Activated CD8-positive, alpha-beta T cell treated with anti-CD3 and anti-CD28 coated beads for 36 hours (primary cell): ENCODE measurements at regions of chr7 and their contacts with region 1.

Region 1: GRCh38 chr7:74206589-74207120 is 3.2 kb upstream of the LAT2 start:
- DNase-seq: peak; percentile 87
- ATAC-seq: peak; percentile 82
- H3K4me3 Mint-ChIP-seq: no peak overlapping the region
- H3K27ac Mint-ChIP-seq: no peak overlapping the region
- H3K4me1 Mint-ChIP-seq: peaks cover 15% of the 10 kb centered on the region
- H3K27me3 Mint-ChIP-seq: peaks cover 5% of the 10 kb centered on the region
- CTCF ChIP-seq: peak; percentile 99

Region 2: GRCh38 chr7:74173866-74174605 is 32.6 kb before region 1 on chr7 and contains the start of gene EIF4H:
- CTCF ChIA-PET with region 1: interaction called, 13 read pairs
- POLR2A ChIA-PET with region 1: interaction called, 4 read pairs
- intact Hi-C with region 1: no loop called
- DNase-seq: peak; percentile 96
- ATAC-seq: peak; percentile 87
- H3K4me3 Mint-ChIP-seq: peak within 1 kb of the TSS; percentile 81
- H3K27ac Mint-ChIP-seq: peak within 1 kb of the TSS; percentile 94
- H3K4me1 Mint-ChIP-seq: peaks cover 35% of the 10 kb centered on the region
- H3K27me3 Mint-ChIP-seq: no peaks in the 10 kb centered on the region
- CTCF ChIP-seq: no peak
- total RNA-seq, gene EIF4H: 461 to 464 TPM

Region 3: GRCh38 chr7:74193054-74193453 is 13.6 kb before region 1 on chr7:
- CTCF ChIA-PET with region 1: interaction called, 36 read pairs
- POLR2A ChIA-PET with region 1: interaction called, 10 read pairs
- intact Hi-C with region 1: no loop called
- DNase-seq: no peak
- ATAC-seq: no peak
- H3K4me3 Mint-ChIP-seq: no peak overlapping the region
- H3K27ac Mint-ChIP-seq: peak overlapping the region; percentile 57
- H3K4me1 Mint-ChIP-seq: peaks cover 24% of the 10 kb centered on the region
- H3K27me3 Mint-ChIP-seq: no peaks in the 10 kb centered on the region
- CTCF ChIP-seq: no peak

Region 4: GRCh38 chr7:74217455-74218342 is 11.0 kb after region 1 on chr7:
- CTCF ChIA-PET with region 1: interaction called, 19 read pairs
- POLR2A ChIA-PET with region 1: interaction called, 3 read pairs
- intact Hi-C with region 1: no loop called
- DNase-seq: peak; percentile 56
- ATAC-seq: peak; percentile 55
- H3K4me3 Mint-ChIP-seq: peak overlapping the region; percentile 8
- H3K27ac Mint-ChIP-seq: peak overlapping the region; percentile 73
- H3K4me1 Mint-ChIP-seq: peaks cover 16% of the 10 kb centered on the region
- H3K27me3 Mint-ChIP-seq: no peaks in the 10 kb centered on the region
- CTCF ChIP-seq: no peak

Region 5: DNA sequence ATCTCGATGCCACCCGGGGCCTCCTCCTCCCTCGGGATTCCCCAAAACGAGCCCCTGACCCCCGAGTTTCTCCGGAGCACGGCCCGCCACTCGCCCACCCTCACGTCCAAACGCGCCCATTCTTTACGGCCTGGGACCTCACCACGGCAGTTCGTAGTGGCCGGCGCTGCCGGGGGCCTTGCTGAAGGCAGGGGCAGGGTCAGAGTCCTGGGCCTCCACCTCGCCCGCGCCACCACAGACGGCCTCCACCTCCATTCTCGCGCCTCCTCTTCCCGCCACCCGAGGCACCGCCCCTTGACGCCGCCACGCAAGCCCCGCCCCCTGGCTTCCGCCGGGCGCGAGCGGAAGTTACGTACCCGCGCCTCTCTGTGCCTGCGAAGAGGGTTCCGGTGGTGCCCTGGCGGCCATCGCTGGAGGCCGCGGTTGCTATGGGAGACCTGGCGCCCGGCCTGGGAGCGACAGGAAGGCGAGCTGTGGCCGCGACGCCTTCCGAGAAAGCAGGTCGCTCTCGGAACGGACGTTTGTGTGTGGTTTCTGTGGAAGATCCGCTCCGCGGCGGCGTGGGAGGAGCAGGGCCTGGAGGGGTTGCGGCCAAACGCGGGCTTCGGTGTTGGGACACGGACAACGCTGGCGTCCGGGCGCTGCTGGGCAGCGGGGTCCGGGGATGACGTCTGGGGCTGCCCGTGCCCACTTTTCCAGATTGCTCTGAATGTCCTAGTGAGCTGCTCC is 47.6 kb after region 1 on chr7 and contains the start of gene RFC2:
- CTCF ChIA-PET with region 1: interaction called, 12 read pairs
- POLR2A ChIA-PET with region 1: interaction called, 3 read pairs
- intact Hi-C with region 1: no loop called
- DNase-seq: peak; percentile 96
- ATAC-seq: peak; percentile 98
- H3K4me3 Mint-ChIP-seq: peak within 1 kb of the TSS; percentile 97
- H3K27ac Mint-ChIP-seq: peak within 1 kb of the TSS; percentile 95
- H3K4me1 Mint-ChIP-seq: peaks cover 14% of the 10 kb centered on the region
- H3K27me3 Mint-ChIP-seq: no peaks in the 10 kb centered on the region
- CTCF ChIP-seq: no peak
- total RNA-seq, gene RFC2: 90.7 to 91.8 TPM

Region 6: DNA sequence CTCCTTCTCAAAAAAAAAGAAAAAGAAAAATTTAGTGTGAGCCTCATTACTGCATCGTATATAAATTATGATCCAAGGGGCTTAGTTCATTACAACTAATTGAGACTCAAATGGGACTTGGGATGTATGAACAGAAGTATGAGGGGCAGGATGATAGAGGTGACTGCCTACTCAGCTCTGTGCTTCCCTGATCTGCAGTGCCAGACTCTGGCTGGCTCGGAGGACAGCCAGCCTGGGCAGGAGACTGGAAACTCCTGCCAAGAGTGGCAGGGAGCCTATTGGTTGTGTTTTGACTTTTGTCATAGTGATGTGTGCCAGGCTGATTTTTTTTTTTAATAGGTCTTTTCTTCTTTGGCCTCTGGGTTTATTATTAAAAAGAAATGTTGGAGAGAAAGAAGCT is 173.3 kb after region 1 on chr7:
- CTCF ChIA-PET with region 1: interaction called, 11 read pairs
- POLR2A ChIA-PET with region 1: no interaction called
- intact Hi-C with region 1: no loop called
- DNase-seq: no peak
- ATAC-seq: no peak
- H3K4me3 Mint-ChIP-seq: no peak overlapping the region
- H3K27ac Mint-ChIP-seq: no peak overlapping the region
- H3K4me1 Mint-ChIP-seq: no peaks in the 10 kb centered on the region
- H3K27me3 Mint-ChIP-seq: no peaks in the 10 kb centered on the region
- CTCF ChIP-seq: no peak